ENCODE measurements at regions of chr4 and their contacts with region 1.

Region 1: GRCh38 chr4:129093191-129093920 is at the start of gene SCLT1:
- DNase-seq: peak; percentile 100
- H3K4me3 Mint-ChIP-seq: no peak within 1 kb of the TSS
- H3K27ac Mint-ChIP-seq: no peak within 1 kb of the TSS
- H3K4me1 Mint-ChIP-seq: peaks cover 13% of the 10 kb centered on the region
- H3K27me3 Mint-ChIP-seq: no peaks in the 10 kb centered on the region
- CTCF ChIP-seq: no peak
- total RNA-seq, gene SCLT1: 16.2 and 20.7 TPM in 2 replicates

Region 2: DNA sequence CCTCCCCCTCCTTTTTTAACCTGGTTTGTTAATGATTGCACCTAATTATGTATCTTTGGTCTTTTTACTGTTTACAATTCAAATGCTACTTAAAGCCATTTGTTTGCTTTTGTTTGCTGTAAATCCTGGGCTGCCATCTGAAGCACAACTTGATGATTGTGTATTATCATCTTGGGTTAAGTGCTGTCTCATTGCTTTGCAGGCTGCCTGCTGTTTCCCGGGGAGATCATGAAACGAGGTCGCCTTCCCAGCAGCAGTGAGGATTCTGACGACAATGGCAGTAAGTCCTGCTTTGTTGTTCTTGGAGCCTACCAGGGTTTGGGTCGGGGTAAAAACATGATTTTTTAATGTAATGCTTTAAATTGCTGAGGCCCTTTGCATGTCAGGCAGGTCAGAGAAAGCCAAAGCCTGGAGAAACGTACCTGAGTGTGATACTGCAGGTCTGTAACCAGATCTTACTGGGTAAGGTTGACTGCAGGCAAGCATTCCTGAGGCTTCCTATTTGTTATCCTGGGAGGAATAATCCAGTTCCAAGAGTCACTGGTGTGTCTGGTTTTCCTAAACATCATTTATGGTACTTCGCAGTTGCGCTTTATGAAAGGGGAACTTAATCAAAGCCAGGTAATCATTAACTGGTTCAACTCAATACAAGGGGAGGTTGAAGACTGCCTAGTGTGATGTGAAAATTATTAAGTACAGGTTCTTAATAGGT is 261.7 kb before region 1 on chr4:
- CTCF ChIA-PET with region 1: no interaction called
- POLR2A ChIA-PET with region 1: no interaction called
- intact Hi-C with region 1: no loop called
- DNase-seq: no peak
- H3K4me3 Mint-ChIP-seq: no peak overlapping the region
- H3K27ac Mint-ChIP-seq: no peak overlapping the region
- H3K4me1 Mint-ChIP-seq: peaks cover 12% of the 10 kb centered on the region
- H3K27me3 Mint-ChIP-seq: no peaks in the 10 kb centered on the region
- CTCF ChIP-seq: no peak

Region 3: GRCh38 chr4:128871948-128872347 is 221.4 kb before region 1 on chr4:
- CTCF ChIA-PET with region 1: interaction called, 3 read pairs
- POLR2A ChIA-PET with region 1: no interaction called
- intact Hi-C with region 1: loop called (anchors 5 kb)
- DNase-seq: peak; percentile 87
- H3K4me3 Mint-ChIP-seq: no peak overlapping the region
- H3K27ac Mint-ChIP-seq: peak overlapping the region; percentile 73
- H3K4me1 Mint-ChIP-seq: peaks cover 18% of the 10 kb centered on the region
- H3K27me3 Mint-ChIP-seq: no peaks in the 10 kb centered on the region
- CTCF ChIP-seq: no peak

Region 4: GRCh38 chr4:129043523-129043922 is 49.8 kb before region 1 on chr4:
- CTCF ChIA-PET with region 1: interaction called, 9 read pairs
- POLR2A ChIA-PET with region 1: interaction called, 9 read pairs
- intact Hi-C with region 1: loop called (anchors 1 kb)
- DNase-seq: peak; percentile 43
- H3K4me3 Mint-ChIP-seq: no peak overlapping the region
- H3K27ac Mint-ChIP-seq: no peak overlapping the region
- H3K4me1 Mint-ChIP-seq: no peaks in the 10 kb centered on the region
- H3K27me3 Mint-ChIP-seq: no peaks in the 10 kb centered on the region
- CTCF ChIP-seq: peak; percentile 28

Region 5: DNA sequence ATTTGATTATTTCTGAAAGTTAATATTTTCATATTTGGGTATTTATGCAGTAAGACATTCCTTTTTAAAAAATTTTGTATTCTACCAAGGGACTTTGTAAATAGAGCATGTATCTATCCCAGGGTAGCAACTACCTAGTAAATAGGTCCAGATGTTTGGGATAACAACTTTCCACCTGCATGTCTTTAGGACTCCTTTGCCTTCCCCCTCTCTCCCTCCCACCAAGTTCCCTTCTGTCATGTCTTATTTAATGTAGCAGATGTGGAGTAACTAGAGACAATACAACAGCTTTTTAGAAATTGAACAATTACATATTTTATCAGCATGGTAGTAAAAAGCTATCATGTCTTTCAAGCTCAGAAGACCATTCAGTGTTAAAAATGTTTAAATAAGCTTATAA is 823.6 kb after region 1 on chr4:
- CTCF ChIA-PET with region 1: no interaction called
- POLR2A ChIA-PET with region 1: no interaction called
- intact Hi-C with region 1: no loop called
- DNase-seq: no peak
- H3K4me3 Mint-ChIP-seq: no peak overlapping the region
- H3K27ac Mint-ChIP-seq: no peak overlapping the region
- H3K4me1 Mint-ChIP-seq: no peaks in the 10 kb centered on the region
- H3K27me3 Mint-ChIP-seq: no peaks in the 10 kb centered on the region
- CTCF ChIP-seq: no peak